ENCODE measurements at regions of chr1 and their contacts with region 1.

Region 1: GRCh38 chr1:17274186-17275170 is 25.6 kb downstream of the PADI3 start:
- H3K4me3 ChIP-seq: no peak overlapping the region
- H3K27ac ChIP-seq: no peak overlapping the region
- H3K4me1 ChIP-seq: no peaks in the 10 kb centered on the region
- CTCF ChIP-seq: peak; percentile 75

Region 2: GRCh38 chr1:17259233-17259873 is 15.1 kb before region 1 on chr1:
- CTCF ChIA-PET with region 1: interaction called, 30 read pairs
- POLR2A ChIA-PET with region 1: no interaction called
- H3K4me3 ChIP-seq: no peak overlapping the region
- H3K27ac ChIP-seq: no peak overlapping the region
- H3K4me1 ChIP-seq: no peaks in the 10 kb centered on the region
- CTCF ChIP-seq: no peak

Region 3: DNA sequence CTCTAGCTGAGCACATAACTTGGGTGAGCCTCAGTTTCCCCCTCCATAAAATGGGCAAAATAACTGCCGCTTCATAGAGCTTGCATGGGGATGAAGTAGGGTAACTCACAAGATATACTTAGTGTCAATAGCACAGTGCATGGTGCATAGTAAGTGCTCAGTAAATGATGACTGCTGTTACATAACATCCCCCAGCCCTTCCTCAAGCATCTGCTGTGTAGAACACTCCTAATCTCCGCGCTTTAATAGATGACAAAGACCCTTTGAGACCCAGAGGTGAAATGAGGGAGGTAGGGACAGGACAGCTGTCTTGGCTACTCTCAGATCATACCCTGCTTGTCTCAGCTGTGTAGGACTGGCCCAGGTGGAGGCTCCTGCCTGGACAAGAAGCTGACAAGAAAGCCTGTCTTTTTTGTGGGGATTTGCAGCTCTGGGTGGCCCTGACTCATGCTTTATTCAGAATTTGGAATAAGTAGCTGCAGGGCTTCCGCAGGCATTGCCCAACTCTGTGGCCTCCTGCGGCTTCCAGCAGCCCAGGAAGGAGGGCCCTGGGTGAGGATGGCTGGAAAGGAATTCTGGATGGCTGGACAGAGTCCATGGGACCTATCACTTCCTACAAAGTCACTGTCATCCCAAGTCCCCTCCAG is 12.8 kb after region 1 on chr1:
- CTCF ChIA-PET with region 1: interaction called, 13 read pairs
- POLR2A ChIA-PET with region 1: no interaction called
- H3K4me3 ChIP-seq: no peak overlapping the region
- H3K27ac ChIP-seq: no peak overlapping the region
- H3K4me1 ChIP-seq: peaks cover 3% of the 10 kb centered on the region; the same call in 1 of the 2 replicates
- CTCF ChIP-seq: no peak

Measured in HEK293 (cell line).